Adrenal gland (tissue), 19 donors: ENCODE measurements at regions of chr1 and their contacts with region 1.

Region 1: DNA sequence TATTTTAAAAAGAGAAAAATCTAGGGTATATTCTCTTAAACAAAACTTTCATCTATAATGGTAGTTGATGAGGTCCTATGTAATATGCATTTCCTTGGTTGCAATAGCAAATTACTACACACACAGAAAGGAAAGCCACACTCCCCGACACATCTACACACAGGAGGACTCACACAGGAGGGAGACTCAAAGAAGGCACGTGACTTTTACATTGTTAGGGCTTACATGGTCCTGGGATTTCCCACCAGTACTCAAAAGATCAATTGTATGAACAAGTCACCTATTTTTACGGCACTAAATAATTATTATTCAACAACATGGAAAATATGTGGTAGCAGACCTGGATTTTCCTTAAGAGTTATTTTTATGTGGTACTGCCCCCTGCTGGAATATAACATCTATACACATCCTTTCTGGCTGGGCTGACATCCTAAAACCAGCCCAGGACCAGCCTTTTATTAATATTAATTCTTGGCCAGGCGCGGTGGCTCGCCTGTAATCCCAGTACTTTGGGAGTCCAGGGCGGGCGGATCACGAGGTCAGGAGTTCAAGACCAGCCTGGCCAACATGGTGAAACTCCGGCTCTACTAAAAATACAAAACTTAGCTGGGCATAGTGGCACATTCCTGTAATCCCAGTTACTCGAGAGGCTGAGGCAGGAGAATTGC is 33.9 kb upstream of the LGALS8 start:
- DNase-seq: peak in 6 of 7 donors; percentile 15 to 59 (median 24)
- H3K4me3 ChIP-seq: no peak overlapping the region
- H3K27ac ChIP-seq: peak overlapping the region in 1 of 5 donors; percentile 29
- H3K4me1 ChIP-seq: no peaks in the 10 kb centered on the region
- H3K27me3 ChIP-seq: no peaks in the 10 kb centered on the region
- CTCF ChIP-seq: peak; percentile 45 to 72 (median 62)
- POLR2A ChIP-seq: no peak

Region 2: GRCh38 chr1:236103646-236104218 is 386.1 kb before region 1 on chr1:
- intact Hi-C with region 1: loop called (anchors 2 to 5 kb)
- DNase-seq: peak; percentile 28 to 75 (median 57)
- H3K4me3 ChIP-seq: no peak overlapping the region
- H3K27ac ChIP-seq: no peak overlapping the region
- H3K4me1 ChIP-seq: no peaks in the 10 kb centered on the region
- H3K27me3 ChIP-seq: peaks cover 11% of the 10 kb centered on the region
- CTCF ChIP-seq: peak; percentile 68 to 87 (median 82)
- POLR2A ChIP-seq: no peak

Region 3: DNA sequence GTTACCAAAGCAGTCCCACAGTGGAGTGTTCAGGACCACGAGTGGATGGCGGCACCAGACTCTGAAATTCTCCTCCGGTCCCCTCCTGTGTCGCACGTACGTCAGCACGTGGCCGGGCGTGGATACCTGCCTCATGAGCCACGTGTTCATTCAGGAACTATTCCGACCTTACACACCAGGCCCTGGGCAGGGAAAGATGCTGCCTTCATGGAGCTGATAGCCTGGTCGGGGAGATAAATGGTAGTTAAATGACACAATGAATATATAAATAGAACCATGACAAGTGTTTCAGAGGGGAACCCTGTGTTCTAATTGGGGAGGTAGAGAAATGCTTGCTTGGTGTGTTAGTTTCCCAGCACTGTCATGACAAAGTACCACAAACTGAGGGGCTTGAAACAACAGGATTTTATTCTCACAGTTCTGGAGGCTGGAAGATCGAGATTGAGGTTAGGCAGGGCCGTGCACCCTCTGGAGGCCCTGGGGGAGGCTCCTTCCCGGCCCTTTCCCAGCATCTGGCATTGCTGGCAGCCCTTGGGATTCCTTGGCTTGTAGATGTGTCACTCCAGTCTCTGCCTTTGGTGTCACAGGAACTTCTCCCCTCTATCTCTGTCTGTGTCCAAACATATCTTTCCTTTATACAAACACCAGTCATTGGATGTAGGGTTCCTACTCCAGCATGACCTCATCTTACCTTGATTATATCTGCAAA is 376.4 kb before region 1 on chr1:
- intact Hi-C with region 1: loop called (anchors 2 to 5 kb)
- DNase-seq: no peak
- H3K4me3 ChIP-seq: no peak overlapping the region
- H3K27ac ChIP-seq: no peak overlapping the region
- H3K4me1 ChIP-seq: no peaks in the 10 kb centered on the region
- H3K27me3 ChIP-seq: peaks cover 4% of the 10 kb centered on the region
- CTCF ChIP-seq: no peak
- POLR2A ChIP-seq: no peak

Region 4: DNA sequence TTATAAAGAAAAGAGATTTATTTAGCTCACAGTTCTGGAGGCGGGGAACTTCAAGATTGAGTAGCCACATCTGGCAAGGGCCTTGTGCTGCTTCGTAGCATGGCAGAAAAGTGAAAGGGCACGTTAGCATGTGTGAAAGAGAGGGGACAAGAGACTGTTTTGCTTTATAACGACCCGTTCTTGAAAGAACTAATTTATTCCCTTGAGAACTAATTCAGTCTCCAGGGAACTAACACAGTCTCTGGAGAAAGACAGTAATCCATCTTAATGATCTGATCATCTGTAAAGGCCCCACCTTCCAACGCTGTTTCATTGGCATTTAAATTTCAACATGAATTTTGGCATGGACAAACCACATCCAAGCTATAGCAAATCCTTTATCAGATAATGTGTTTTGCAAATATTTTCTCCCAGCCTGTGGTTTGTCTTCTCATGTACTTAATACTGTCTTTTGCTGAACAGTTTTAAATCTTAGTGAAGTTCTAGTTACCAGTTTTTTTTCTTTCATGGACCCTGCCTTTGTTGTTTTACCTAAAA is 331.3 kb after region 1 on chr1:
- intact Hi-C with region 1: no loop called
- DNase-seq: no peak
- H3K4me3 ChIP-seq: no peak overlapping the region
- H3K27ac ChIP-seq: no peak overlapping the region
- H3K4me1 ChIP-seq: no peaks in the 10 kb centered on the region
- H3K27me3 ChIP-seq: no peaks in the 10 kb centered on the region
- CTCF ChIP-seq: no peak
- POLR2A ChIP-seq: no peak